Activated T-helper 2 cell treated with anti-CD3 and anti-CD28 coated beads, Interferon-gamma antibody, Interleukin-2, Interleukin-4, amounts not matched to agents 10 μg/mL and 5 μg/mL and 100 μg/mL, durations not matched to agents 14 hours and 24 hours and 36 hours (primary cell): ENCODE measurements at regions of chr5 and their contacts with region 1.

Region 1: DNA sequence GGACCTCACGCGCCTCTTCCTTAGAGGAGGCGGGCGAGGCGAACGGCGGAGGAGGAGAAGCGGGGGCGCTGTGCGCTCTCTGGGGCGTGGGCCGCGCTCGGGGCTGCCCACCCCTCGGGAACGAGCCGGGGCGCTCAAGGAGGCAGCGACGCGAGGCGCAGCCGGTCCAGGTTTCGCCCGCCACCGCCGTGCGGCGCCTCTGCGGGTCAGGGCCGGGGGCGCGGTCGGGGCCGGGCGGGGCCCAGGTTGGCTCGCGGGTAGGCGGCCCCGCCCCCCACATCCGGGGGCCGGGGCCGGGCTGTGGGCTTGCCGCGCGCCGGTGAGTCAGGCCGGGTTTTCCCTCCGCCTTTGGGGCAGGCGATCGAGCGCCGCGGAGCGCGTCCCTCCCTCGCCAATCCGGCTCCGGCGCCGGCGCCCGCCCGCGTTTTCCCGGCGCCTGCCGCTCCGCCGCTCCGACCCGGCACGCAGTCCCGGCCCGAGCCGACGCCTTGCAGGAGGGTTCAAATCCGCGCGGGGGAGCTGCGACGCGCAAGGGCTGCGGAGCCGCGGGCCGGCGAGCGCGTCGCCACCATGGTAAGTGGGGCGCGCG is at the start of gene N4BP3:
- DNase-seq: peak; percentile 83
- H3K4me3 Mint-ChIP-seq: peak within 1 kb of the TSS; percentile 84
- H3K27ac Mint-ChIP-seq: peak within 1 kb of the TSS; percentile 80
- H3K4me1 Mint-ChIP-seq: peaks cover 29% of the 10 kb centered on the region
- H3K27me3 Mint-ChIP-seq: peaks cover 12% of the 10 kb centered on the region
- total RNA-seq, gene N4BP3: 3.3 and 3.4 TPM in 2 replicates

Region 2: DNA sequence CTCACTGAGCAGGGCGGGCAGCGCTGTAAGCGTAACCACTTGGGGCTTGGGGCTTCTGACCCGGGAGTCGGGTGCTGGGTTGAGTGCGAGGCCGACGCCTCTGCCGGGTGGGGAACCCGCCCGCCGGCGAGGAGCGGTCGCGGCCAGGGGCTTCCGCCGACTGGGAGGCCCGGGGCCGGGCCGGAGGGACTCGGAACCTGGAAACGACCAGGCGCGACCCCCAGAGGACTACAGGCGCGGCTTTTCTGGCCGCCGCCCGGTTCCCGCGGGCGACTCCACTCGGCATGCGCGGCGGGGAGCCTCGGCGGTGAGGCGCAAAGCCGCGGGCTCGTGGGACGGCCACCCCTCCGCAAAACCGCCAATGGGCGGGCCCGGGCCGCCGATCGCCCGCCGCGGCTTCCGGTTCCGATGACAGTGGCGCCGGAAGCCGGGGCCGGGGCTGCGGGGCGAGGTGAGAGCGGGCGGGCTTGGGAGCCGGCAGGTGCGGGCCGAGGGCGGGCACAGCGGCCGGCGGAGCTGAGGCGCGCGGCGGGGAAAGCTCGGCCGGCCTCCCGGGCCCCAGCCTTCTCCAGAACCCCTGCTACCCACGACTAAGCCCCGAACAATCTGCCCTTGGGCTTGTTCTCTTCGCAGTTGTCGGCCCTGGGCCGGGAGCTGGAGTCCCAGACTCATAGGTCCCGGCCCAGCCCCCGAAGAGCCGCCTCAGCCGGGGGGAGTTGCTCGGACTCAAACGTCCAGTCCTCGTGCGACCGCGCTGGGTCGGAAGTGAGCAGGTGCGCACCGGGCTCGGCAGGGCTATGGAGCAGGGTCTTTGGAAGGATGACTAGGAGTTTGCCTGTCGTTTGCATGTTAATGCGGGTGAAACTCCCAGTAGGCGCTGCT is 17.6 kb after region 1 on chr5 and contains the start of gene RMND5B:
- intact Hi-C with region 1: loop called (anchors 1 kb)
- DNase-seq: peak; percentile 81
- H3K4me3 Mint-ChIP-seq: peak within 1 kb of the TSS; percentile 86
- H3K27ac Mint-ChIP-seq: peak within 1 kb of the TSS; percentile 70
- H3K4me1 Mint-ChIP-seq: peaks cover 8% of the 10 kb centered on the region
- H3K27me3 Mint-ChIP-seq: no peaks in the 10 kb centered on the region
- total RNA-seq, gene RMND5B: 29.3 and 31.6 TPM in 2 replicates

Region 3: DNA sequence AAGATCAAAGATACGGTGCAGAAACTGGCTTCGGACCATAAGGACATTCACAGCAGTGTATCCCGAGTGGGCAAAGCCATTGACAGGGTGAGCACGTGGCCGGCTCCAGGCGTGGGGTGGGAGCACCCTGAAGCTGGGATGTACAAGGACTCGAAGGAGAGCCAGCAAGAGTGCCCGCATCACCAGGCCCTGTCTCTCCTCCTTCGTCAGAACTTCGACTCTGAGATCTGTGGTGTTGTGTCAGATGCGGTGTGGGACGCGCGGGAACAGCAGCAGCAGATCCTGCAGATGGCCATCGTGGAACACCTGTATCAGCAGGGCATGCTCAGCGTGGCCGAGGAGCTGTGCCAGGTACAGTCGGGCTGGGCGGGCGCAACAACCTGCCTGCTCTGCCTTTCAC is 29.3 kb after region 1 on chr5:
- intact Hi-C with region 1: no loop called
- DNase-seq: no peak
- H3K4me3 Mint-ChIP-seq: no peak overlapping the region
- H3K27ac Mint-ChIP-seq: no peak overlapping the region
- H3K4me1 Mint-ChIP-seq: no peaks in the 10 kb centered on the region
- H3K27me3 Mint-ChIP-seq: no peaks in the 10 kb centered on the region

Region 4: GRCh38 chr5:178153573-178154343 is 40.5 kb after region 1 on chr5 and contains the start of gene NHP2:
- intact Hi-C with region 1: loop called (anchors 5 kb)
- DNase-seq: peak; percentile 98
- H3K4me3 Mint-ChIP-seq: peak within 1 kb of the TSS; percentile 93
- H3K27ac Mint-ChIP-seq: peak within 1 kb of the TSS; percentile 83
- H3K4me1 Mint-ChIP-seq: peaks cover 29% of the 10 kb centered on the region
- H3K27me3 Mint-ChIP-seq: no peaks in the 10 kb centered on the region
- total RNA-seq, gene NHP2: 221 and 228 TPM in 2 replicates